ENCODE measurements at regions of chr11 and their contacts with region 1.

Region 1: GRCh38 chr11:12087075-12088004 is 23.1 kb upstream of the MICAL2 start:
- DNase-seq: peak; percentile 82
- H3K4me3 Mint-ChIP-seq: peak overlapping the region; percentile 55
- H3K27ac Mint-ChIP-seq: peak overlapping the region; percentile 93
- H3K4me1 Mint-ChIP-seq: peaks cover 76% of the 10 kb centered on the region
- H3K27me3 Mint-ChIP-seq: peaks cover 3% of the 10 kb centered on the region

Region 2: DNA sequence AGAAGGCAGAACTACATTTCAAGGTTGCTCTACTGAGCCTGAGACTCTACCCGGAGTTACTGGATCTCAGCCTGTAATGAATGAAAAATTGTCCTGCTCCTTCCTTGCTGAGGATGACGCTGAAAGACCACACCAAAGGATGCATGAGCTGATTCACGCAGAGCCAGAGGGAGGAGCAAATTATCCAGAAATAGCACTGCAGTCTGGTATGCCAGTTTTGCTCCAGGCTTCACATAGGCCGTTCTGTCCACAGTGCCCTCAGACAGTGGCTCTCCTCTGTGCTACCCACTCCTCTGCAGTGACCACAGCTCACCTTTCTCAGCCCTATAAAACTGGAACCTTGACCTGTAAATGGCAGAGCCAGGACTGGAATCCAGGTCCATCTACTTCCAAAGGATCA is 386.3 kb before region 1 on chr11:
- CTCF ChIA-PET with region 1: no interaction called
- POLR2A ChIA-PET with region 1: no interaction called
- DNase-seq: no peak
- H3K4me3 Mint-ChIP-seq: no peak overlapping the region
- H3K27ac Mint-ChIP-seq: no peak overlapping the region
- H3K4me1 Mint-ChIP-seq: no peaks in the 10 kb centered on the region
- H3K27me3 Mint-ChIP-seq: peaks cover 12% of the 10 kb centered on the region

Region 3: GRCh38 chr11:12043959-12044819 is 43.2 kb before region 1 on chr11:
- CTCF ChIA-PET with region 1: interaction called, 14 read pairs
- POLR2A ChIA-PET with region 1: interaction called, 3 read pairs
- DNase-seq: peak; percentile 72
- H3K4me3 Mint-ChIP-seq: no peak overlapping the region
- H3K27ac Mint-ChIP-seq: no peak overlapping the region
- H3K4me1 Mint-ChIP-seq: peaks cover 9% of the 10 kb centered on the region
- H3K27me3 Mint-ChIP-seq: peaks cover 4% of the 10 kb centered on the region

Region 4: DNA sequence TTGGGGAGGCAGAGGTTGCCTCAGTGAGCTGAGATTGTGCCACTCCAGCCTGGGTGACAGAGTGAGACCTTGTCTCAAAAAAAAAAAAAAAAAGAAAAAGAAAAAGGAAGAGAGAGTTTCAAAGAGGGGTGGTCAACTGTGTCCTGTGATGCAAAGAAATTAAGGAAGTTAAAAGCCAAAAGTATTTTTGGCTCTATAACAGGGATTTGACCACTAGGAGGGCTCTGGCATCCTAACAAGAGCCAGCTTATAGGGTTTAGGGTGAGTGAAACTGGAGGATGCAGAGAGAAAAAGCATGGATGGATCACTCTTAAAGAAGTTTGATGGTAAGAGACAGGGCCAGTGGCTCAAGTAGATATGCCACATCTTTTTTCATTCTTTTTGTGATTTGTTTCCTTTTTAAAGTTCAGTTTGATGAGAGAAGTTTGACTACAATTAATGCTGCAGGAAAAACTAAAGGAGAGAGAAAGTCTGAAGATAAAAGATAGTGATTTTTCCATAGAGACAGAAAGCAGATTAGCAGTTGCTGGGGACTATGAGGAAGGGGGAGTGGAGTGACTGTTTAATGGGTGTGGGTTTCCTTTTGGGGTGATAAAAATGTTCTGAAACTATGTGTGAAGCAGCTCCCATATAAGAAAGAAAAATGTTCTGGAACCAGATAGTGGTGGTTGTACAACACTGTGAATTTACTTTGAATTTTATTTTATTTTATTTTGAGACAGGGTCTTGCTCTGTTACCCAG is 12.0 kb after region 1 on chr11:
- CTCF ChIA-PET with region 1: interaction called, 9 read pairs
- POLR2A ChIA-PET with region 1: interaction called, 10 read pairs
- DNase-seq: no peak
- H3K4me3 Mint-ChIP-seq: no peak overlapping the region
- H3K27ac Mint-ChIP-seq: no peak overlapping the region
- H3K4me1 Mint-ChIP-seq: peaks cover 39% of the 10 kb centered on the region
- H3K27me3 Mint-ChIP-seq: peaks cover 21% of the 10 kb centered on the region

Region 5: DNA sequence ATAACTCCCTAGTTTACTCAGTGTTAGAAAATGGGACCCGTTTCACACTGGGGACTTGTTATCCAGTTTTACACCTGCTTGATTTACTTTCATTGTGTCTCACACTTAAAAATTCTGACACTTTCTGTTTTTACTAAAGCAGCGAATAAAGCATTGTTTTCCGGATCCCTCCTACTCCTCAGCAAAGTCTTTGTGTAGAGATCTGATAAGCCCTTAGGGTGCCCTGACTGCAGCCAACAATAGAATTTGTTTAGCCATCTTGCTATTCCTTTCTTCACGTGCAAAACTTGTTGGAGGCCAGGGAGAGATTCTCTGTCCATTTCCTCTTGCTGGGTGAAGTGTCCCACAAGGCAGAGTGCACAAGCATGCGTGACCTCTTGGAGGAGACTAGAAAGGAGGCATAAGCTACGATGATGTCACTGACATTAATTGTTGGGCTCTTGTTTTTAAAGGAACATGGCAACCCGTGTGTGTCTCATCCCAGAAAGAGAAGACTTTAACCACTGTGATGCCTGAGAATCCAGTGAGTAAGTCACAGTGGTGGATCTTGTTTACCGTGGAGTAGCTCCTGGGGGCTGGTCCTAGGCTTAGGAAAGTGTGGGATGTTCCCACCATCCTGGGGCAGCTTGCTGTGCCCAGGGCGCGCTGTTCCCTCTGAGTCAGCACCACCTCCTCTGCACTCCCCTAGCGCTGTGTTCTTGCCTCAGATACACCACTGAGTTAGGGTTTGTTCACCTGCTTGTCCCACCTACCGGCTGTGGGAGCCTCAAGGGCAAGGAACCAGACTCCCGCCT is 50.8 kb after region 1 on chr11:
- CTCF ChIA-PET with region 1: no interaction called
- POLR2A ChIA-PET with region 1: interaction called, 15 read pairs
- DNase-seq: no peak
- H3K4me3 Mint-ChIP-seq: no peak overlapping the region
- H3K27ac Mint-ChIP-seq: peak overlapping the region; percentile 65
- H3K4me1 Mint-ChIP-seq: peaks cover 58% of the 10 kb centered on the region
- H3K27me3 Mint-ChIP-seq: no peaks in the 10 kb centered on the region

Region 6: DNA sequence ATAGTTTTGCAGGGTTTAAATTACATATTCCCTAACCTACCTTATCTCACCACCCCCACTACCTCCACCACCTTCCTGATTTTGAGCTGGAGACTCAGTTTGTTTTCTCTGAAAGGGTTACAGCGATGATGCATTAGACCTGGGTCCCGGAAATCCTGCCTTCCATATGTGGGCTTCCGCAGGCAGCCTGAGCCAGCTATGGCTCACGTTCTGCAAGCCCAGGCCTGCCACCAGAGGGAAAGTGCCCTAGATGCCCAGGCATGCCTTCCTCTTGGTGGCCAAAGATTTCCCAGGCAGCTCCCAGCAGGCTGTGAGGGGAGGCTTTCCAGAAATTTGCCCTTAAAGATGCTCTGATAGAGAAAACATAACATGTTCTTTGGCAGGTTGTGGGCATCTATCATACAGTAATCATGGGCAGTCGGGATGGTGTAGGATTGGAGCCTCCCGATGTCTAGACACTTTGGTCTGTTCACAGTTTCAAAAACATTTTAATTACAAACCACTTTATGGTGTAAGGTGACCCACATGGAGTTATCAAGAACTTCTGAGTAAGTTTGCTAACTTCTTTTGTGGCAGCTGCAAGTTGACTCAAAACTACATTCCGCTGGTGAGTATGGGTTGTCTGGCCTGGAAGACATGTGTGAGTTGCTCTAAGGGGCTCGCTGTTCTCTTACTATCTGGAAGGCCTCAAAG is 102.3 kb after region 1 on chr11:
- CTCF ChIA-PET with region 1: interaction called, 15 read pairs
- POLR2A ChIA-PET with region 1: interaction called, 65 read pairs
- DNase-seq: peak; percentile 70
- H3K4me3 Mint-ChIP-seq: peak overlapping the region; percentile 58
- H3K27ac Mint-ChIP-seq: peak overlapping the region; percentile 83
- H3K4me1 Mint-ChIP-seq: peaks cover 67% of the 10 kb centered on the region
- H3K27me3 Mint-ChIP-seq: no peaks in the 10 kb centered on the region

Region 7: GRCh38 chr11:12224537-12224893 is 137.2 kb after region 1 on chr11:
- CTCF ChIA-PET with region 1: interaction called, 31 read pairs
- POLR2A ChIA-PET with region 1: interaction called, 42 read pairs
- DNase-seq: peak; percentile 98
- H3K4me3 Mint-ChIP-seq: peak overlapping the region; percentile 72
- H3K27ac Mint-ChIP-seq: peak overlapping the region; percentile 96
- H3K4me1 Mint-ChIP-seq: peaks cover 68% of the 10 kb centered on the region
- H3K27me3 Mint-ChIP-seq: no peaks in the 10 kb centered on the region

Region 8: DNA sequence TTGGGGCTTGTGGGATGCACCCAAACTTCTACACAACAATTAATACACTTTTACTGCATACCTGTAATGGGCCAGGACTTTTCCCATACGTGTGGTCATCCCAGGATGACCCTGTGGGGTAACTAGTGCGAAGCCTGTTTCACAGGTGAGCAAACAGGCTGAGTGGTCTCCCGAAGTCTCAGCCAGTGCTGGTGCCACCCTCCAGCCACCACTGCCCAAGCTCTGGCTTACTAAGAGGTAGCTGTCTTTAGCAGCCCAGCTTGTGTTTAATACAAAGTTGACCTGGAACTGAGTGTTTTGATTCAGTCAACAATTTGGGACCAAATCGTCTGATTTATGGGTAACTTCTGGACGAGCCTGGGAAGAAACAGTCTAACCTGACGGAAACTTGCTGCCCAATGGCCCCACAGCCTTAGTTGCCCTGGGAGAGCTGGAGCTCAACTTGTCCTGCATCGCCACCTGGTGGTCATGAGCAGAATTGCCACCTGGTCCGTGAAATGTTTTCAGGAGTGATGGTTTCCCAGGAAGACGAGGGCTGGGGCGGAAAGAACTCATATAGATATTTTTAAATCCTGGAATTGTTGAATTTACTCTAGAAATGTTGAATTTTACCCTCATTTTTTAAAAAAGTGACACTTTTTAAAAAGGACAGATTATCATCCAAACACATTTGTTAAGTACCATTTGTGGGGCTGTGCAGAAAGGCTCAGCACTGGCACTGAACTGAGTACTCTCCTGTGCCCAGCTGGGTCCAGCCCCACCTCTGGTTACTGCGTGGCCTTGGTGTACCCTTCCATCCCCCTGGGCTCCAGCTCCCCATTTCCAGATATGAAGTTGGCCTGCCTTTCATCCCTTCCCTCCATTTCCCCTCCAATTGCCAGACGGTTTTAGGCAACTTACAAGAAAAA is 194.5 kb after region 1 on chr11:
- CTCF ChIA-PET with region 1: interaction called, 28 read pairs
- POLR2A ChIA-PET with region 1: interaction called, 3 read pairs
- DNase-seq: peak; percentile 81
- H3K4me3 Mint-ChIP-seq: no peak overlapping the region
- H3K27ac Mint-ChIP-seq: no peak overlapping the region
- H3K4me1 Mint-ChIP-seq: peaks cover 2% of the 10 kb centered on the region
- H3K27me3 Mint-ChIP-seq: no peaks in the 10 kb centered on the region